AG04450 (cell line): ENCODE measurements at regions of chr1 and their contacts with region 1.

Region 1: DNA sequence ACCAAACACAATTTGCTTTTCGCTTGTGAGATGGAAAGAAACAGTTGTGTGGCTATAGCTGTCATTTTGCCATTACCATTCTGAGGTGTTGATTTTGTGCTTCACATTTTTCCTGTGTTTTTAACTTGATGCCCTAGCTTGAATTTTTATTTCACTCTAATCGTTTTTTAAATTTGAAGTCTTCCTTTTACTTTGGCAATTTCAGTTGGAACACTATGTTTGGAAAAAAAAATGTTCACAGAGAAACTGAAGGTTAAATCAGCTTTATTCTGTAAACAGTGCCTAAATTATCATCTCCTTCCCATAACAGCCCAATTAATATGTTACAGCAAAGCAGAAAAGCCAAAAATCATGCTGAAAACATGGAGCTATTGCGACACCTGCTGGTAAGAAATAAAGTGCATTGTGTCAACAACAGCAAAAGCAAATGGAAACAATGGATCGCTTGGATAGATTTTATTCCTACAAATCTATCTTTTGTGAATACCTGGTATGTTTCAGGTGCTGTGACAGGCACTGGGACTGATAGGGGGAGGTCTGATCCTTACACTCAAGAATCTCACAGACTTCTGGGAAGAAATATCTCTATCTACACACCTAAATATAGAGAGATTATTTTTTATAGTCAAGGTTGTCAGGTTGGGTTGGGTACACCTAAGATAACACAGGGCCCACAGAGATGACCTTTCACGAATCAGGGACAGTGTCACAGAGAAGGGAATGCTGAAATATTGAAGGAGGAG is 16.2 kb upstream of the ERICH3 start:
- DNase-seq: peak; percentile 24
- H3K4me3 ChIP-seq: no peak overlapping the region
- H3K27ac ChIP-seq: no peak overlapping the region
- H3K27me3 ChIP-seq: no peaks in the 10 kb centered on the region
- CTCF ChIP-seq: peak; percentile 84

Region 2: DNA sequence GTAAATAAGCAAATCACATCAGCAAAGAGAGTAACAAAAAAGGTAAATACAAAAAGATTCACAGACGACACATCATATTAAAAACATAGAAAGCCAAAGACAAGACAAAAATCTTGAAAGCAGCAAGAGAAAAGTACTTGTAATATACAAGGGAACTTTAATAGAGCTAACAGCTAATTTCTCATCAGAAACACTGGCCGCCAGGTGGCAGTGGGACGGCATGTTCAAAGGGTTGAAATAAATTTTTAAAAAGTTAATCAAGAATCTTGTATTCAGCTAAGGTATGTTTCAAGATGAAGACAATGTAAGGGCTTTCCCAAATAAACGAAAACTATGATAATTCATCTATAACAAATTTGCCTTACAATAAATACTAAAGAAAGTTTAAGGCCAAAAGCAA is 849.9 kb before region 1 on chr1:
- CTCF ChIA-PET with region 1: interaction called, 23 read pairs
- POLR2A ChIA-PET with region 1: no interaction called
- DNase-seq: no peak
- H3K4me3 ChIP-seq: no peak overlapping the region
- H3K27ac ChIP-seq: no peak overlapping the region
- H3K27me3 ChIP-seq: no peaks in the 10 kb centered on the region
- CTCF ChIP-seq: peak; percentile 45

Region 3: GRCh38 chr1:74480068-74480467 is 209.7 kb before region 1 on chr1:
- CTCF ChIA-PET with region 1: no interaction called
- POLR2A ChIA-PET with region 1: no interaction called
- DNase-seq: no peak
- H3K4me3 ChIP-seq: no peak overlapping the region
- H3K27ac ChIP-seq: no peak overlapping the region
- H3K27me3 ChIP-seq: no peaks in the 10 kb centered on the region
- CTCF ChIP-seq: no peak

Region 4: GRCh38 chr1:74504125-74504932 is 185.5 kb before region 1 on chr1:
- CTCF ChIA-PET with region 1: interaction called, 34 read pairs
- POLR2A ChIA-PET with region 1: no interaction called
- DNase-seq: peak; percentile 13
- H3K4me3 ChIP-seq: no peak overlapping the region
- H3K27ac ChIP-seq: no peak overlapping the region
- H3K27me3 ChIP-seq: no peaks in the 10 kb centered on the region
- CTCF ChIP-seq: peak; percentile 99

Region 5: DNA sequence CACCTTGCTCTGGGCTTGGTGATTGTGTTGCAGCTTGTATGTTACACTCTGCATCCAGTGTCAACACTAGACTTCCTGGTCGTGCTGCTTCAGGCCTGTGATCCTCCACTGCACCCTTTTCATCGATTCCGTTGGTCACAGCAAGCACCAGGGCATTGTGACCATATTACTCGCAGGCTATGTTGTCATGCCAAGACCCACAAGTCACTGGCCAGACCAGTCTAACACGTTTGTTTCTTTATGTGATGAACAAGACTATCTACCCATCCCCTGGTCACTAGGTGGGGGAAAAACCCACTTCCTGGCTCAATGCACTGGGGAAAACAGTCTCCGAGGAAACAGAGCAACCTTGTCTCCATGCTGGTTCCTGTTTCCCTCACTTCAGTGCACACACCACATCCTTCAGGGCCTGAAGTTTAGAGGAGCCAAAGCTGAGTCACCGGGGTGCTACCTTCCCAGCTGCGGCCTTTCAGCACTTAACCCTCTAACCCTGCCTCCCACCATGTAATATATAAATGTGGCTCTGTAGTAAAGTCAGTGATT is 37.1 kb before region 1 on chr1:
- CTCF ChIA-PET with region 1: interaction called, 17 read pairs
- POLR2A ChIA-PET with region 1: no interaction called
- DNase-seq: peak; percentile 48
- H3K4me3 ChIP-seq: no peak overlapping the region
- H3K27ac ChIP-seq: peak overlapping the region; percentile 22
- H3K27me3 ChIP-seq: no peaks in the 10 kb centered on the region
- CTCF ChIP-seq: no peak

Region 6: GRCh38 chr1:74714429-74715235 is 24.8 kb after region 1 on chr1:
- CTCF ChIA-PET with region 1: interaction called, 38 read pairs
- POLR2A ChIA-PET with region 1: no interaction called
- DNase-seq: peak; percentile 8
- H3K4me3 ChIP-seq: no peak overlapping the region
- H3K27ac ChIP-seq: peak overlapping the region; percentile 43
- H3K27me3 ChIP-seq: no peaks in the 10 kb centered on the region
- CTCF ChIP-seq: no peak

Region 7: GRCh38 chr1:74767490-74767889 is 77.7 kb after region 1 on chr1:
- CTCF ChIA-PET with region 1: no interaction called
- POLR2A ChIA-PET with region 1: no interaction called
- DNase-seq: no peak
- H3K4me3 ChIP-seq: no peak overlapping the region
- H3K27ac ChIP-seq: no peak overlapping the region
- H3K27me3 ChIP-seq: no peaks in the 10 kb centered on the region
- CTCF ChIP-seq: peak; percentile 16; the same call in 1 of the 2 replicates

Region 8: GRCh38 chr1:74811436-74812179 is 121.8 kb after region 1 on chr1:
- CTCF ChIA-PET with region 1: no interaction called
- POLR2A ChIA-PET with region 1: no interaction called
- DNase-seq: no peak
- H3K4me3 ChIP-seq: no peak overlapping the region
- H3K27ac ChIP-seq: no peak overlapping the region
- H3K27me3 ChIP-seq: no peaks in the 10 kb centered on the region
- CTCF ChIP-seq: no peak

Region 9: DNA sequence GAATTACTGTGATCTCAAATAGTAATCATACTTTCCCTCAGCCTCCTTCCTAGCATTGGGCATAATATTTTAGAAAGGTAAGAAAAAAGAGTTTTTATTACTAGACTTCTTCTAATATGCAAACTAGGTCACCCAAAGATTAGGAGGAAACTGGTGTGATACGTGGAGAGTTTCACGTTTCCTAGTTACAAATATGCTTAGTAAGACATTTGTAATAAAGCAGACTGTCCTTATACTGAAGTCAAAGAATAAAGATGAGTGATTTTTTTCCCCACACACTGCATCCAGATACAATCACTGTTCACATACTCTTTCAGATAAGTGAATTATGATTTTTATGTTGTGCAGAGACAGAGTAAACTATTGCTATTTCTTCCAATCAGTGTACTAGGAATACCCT is 462.3 kb after region 1 on chr1:
- CTCF ChIA-PET with region 1: no interaction called
- POLR2A ChIA-PET with region 1: no interaction called
- DNase-seq: no peak
- H3K4me3 ChIP-seq: no peak overlapping the region
- H3K27ac ChIP-seq: no peak overlapping the region
- H3K27me3 ChIP-seq: no peaks in the 10 kb centered on the region
- CTCF ChIP-seq: no peak